KBM-7 (cell line): ENCODE measurements at regions of chr2 and their contacts with region 1.

Region 1: GRCh38 chr2:112623913-112624777 is 21.6 kb upstream of the SLC20A1 start:
- DNase-seq: no peak

Region 2: GRCh38 chr2:112941753-112942658 is 317.9 kb after region 1 on chr2:
- in situ Hi-C with region 1: loop called (anchors 25 kb)
- DNase-seq: peak; percentile 74